RWPE1 (cell line): ENCODE measurements at regions of chr17 and their contacts with region 1.

Region 1: DNA sequence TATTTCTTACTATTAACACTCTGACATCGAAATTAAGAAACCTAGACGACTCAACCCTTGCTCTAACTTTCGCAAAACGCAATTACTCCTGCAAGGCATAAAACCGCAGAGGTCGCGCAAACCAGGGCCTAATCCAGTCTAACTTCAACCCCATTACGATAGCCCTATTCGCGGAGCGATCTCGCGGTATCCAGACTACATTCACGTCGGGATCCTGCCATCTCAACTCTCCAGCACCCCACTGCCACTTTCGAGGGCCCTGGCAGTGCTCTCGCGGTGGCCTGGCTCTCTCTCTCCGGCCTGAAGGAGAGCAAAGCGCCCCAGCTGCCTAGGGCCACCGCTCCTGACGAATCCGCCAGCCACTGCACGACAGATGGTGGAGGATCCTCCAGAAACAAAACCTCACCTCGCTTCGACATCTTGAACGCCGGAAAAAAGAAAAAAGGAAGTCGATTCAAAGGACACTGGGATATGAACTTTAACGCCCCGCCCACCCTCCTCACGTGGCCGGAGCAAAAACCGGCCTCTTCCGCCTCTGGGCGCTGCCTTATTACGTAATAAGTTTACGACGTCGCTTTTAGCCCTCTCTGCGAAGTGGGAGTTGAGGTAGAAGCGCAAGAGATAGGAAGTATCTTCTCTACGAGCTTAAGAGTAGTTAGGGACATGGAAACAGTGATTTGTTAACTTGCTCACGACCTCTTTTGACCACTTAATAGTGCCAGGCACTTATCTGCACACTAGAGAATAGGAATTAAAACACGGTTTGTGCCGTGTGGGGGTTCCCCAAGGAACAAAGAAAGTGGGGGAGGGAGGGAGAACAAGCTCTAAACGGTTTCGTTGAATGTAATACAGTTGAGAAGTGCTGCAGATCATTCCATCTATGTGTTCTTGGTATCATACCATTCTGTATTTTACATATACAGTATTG is at the start of gene RPL23:
- DNase-seq: peak; percentile 87
- H3K27ac ChIP-seq: peak within 1 kb of the TSS; percentile 81
- CTCF ChIP-seq: no peak

Region 2: DNA sequence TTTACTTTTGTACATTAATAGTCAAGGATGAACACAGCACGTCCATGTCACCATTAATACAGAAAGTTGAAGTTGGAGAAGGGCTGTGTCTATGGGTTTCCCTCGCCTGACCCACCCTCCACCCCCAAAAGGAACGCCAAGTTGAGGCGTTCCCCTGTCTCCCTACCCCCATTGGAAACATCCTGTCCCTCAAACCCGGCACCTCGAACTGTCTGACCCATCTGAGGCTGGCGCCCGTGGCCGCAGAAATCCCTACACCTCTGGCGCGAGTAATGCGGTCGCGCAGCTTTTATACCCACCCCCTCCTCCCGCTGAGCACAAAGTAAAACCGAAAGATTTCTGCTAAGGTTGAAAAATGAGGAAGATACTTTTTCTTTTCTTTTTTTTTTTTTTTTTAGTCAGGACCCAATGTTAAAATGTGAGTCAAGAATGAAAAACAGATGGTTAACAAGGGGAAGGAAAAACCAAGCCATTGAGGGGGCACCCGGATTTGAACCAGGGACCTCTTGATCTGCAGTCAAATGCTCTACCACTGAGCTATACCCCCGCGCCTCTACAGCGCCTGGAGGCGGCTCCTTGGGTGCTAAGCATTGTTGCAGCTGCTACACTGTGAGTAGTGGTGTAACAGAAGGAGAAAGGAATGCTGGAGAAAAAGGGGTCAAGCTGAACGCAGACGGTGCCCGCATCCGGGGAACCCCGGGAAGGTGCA is 15.4 kb after region 1 on chr17:
- CTCF ChIA-PET with region 1: interaction called, 5 read pairs
- POLR2A ChIA-PET with region 1: interaction called, 13 read pairs
- DNase-seq: peak; percentile 85
- H3K27ac ChIP-seq: peak overlapping the region; percentile 98
- CTCF ChIP-seq: peak; percentile 64